ENCODE measurements at regions of chr9 and their contacts with region 1.

Region 1: GRCh38 chr9:108002371-108002956 is 512.9 kb upstream of the KLF4 start:
- DNase-seq: no peak
- H3K4me3 ChIP-seq: no peak overlapping the region
- H3K27ac ChIP-seq: no peak overlapping the region
- H3K4me1 ChIP-seq: no peaks in the 10 kb centered on the region
- H3K27me3 ChIP-seq: no peaks in the 10 kb centered on the region
- CTCF ChIP-seq: no peak

Region 2: DNA sequence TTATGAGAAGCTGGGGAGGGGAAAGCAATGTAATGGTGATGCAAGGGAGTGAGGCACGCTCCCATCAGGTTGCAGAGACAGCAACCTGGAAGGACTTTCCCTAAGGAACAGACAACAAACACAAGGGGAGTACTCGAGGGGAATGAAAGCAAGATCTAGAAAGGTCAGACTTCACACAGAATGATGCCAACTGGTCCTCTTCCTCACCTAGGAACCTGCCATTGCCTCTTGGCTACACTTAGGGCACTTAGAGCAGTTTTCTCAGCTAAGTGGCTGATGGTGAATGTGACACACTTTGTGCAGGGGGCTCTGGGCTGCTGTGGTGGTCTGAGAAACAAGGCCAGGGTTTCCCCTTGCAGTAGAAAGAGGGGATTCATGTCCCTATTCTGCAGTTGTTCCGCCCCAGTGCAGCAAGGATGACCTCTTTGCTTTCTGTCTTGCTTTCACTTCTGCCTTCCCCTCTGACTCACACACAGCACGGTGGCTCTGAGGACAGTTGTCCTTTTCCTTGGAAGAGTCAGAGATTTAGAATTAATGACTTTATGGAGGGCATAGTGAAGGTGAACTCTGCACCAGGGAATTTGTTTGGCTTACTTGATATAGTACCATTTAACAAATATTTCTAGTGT is 118.9 kb before region 1 on chr9:
- CTCF ChIA-PET with region 1: no interaction called
- POLR2A ChIA-PET with region 1: no interaction called
- intact Hi-C with region 1: loop called (anchors 5 kb)
- DNase-seq: no peak
- H3K4me3 ChIP-seq: no peak overlapping the region
- H3K27ac ChIP-seq: no peak overlapping the region
- H3K4me1 ChIP-seq: peaks cover 13% of the 10 kb centered on the region
- H3K27me3 ChIP-seq: no peaks in the 10 kb centered on the region
- CTCF ChIP-seq: no peak

Region 3: GRCh38 chr9:108041551-108041950 is 39.1 kb after region 1 on chr9:
- CTCF ChIA-PET with region 1: no interaction called
- POLR2A ChIA-PET with region 1: no interaction called
- intact Hi-C with region 1: loop called (anchors 2 kb)
- DNase-seq: peak; percentile 35 to 81
- H3K4me3 ChIP-seq: no peak overlapping the region
- H3K27ac ChIP-seq: peak overlapping the region; percentile 79
- H3K4me1 ChIP-seq: peaks cover 36% of the 10 kb centered on the region
- H3K27me3 ChIP-seq: no peaks in the 10 kb centered on the region
- CTCF ChIP-seq: no peak

Region 4: DNA sequence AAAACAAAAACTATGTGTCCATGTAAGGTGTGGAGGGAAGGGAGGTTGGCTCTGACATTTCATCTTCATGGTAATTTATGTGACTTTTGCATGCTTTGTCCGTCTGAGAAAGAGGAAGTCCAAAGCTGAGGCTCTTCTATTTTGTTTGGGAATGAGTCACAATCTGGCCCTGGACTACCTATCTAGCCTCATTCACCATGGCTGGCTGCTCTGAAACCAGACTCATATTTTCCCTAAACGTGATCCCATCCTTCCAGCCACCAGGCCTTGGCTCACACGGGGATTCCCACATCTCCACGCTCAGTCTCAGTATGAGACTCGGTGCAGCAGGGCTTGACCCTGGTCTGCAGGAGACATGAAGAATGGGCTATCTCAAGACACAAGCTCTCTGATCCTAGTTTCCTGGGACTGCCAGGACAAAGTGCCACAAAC is 180.5 kb after region 1 on chr9:
- CTCF ChIA-PET with region 1: interaction called, 15 read pairs
- POLR2A ChIA-PET with region 1: no interaction called
- intact Hi-C with region 1: no loop called
- DNase-seq: no peak
- H3K4me3 ChIP-seq: no peak overlapping the region
- H3K27ac ChIP-seq: no peak overlapping the region
- H3K4me1 ChIP-seq: no peaks in the 10 kb centered on the region
- H3K27me3 ChIP-seq: no peaks in the 10 kb centered on the region
- CTCF ChIP-seq: no peak